ENCODE measurements at regions of chr4 and their contacts with region 1.

Region 1: DNA sequence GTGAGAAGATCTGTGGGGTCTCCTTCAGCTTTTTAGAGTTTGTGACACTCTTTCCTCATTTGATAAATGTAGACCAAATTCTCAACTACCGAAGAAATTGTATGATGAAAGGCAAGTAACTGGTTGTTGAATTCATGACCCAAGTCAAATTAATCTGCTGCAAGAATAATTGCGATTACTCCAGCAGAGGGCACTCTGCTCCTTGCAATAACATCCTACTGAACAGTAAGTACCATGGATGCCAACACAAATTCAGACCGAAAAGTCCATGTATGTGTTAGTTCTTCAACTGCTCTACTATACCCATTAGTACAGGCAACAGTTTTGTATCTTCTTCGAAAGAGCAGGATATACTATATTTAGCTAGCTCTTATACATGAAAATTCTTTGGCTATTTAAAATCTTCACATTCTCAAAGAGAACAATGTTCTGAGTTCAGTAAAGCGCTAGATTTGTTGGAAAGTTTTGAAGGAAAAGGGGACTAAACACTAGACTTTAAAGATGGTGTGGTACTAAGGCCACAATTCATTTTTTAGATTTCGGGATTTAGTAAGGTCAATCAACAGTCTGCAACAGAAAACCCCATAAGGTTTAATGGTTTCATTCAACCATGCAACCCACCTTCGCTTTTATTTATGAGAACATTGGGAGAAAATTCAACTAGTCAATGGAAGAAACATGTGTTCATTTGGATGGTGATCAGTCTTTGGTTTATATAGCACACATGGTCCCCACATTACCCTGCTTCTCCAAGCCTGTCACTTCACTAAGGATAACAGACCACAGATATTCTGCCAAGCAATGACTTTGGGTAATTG is 105.4 kb upstream of the TBC1D9 start:
- DNase-seq: no peak
- H3K4me3 ChIP-seq: no peak overlapping the region
- H3K27ac ChIP-seq: no peak overlapping the region
- H3K4me1 ChIP-seq: peaks cover 0 to 19% (median 11%) of the 10 kb centered on the region in 6 donors
- H3K27me3 ChIP-seq: no peaks in the 10 kb centered on the region
- CTCF ChIP-seq: peak; percentile 45 to 87 (median 72)
- POLR2A ChIP-seq: no peak

Region 2: DNA sequence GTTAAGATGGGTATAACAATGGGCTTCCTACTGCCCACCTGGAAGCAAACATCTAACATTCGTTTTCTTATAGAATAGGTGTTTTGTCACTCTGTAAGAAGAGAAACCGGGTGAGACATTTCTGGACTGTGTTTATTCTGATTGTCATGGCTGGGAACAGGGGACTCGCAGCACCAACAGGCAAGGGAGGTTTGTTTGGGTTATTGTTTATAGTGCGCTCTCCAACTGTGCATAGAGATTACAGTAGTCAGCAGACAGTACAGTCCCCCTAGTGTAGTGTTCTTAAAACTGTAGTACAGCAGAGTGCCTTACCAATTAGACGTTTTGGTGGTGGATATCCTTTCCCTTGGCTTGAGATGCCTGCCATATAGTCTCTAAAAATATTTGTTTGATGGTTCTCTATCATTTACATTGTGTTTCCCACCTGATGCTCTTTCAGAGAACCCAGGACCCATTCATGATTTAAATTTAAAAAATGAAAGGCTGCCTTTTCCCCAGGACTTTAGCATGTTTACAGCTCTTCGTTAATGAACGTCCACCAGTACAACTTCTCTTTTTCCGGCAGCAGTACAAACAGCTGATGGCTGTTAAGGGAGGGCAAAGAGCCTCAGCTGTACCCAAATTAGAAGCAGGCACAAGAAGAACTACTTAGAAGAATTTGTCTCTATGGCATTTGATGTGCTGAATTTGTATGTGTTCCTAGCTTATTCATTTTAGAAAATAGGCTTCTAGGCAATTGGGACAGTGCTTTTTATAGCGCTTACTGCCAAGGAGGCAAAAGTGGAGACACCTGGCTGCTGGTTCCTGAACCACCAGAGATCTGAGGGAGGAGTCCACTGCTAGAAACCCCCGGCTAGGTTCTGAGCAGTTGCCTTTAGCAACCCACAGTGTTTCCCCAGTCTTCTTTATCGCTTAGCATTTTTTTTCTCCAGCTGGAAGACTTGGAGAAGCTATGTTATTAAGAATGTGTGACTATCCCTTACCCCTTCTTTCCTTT is 272.7 kb after region 1 on chr4:
- intact Hi-C with region 1: loop called (anchors 2 kb)
- DNase-seq: no peak
- H3K4me3 ChIP-seq: peak overlapping the region in 3 of 8 donors; percentile 67 to 81 (median 80)
- H3K27ac ChIP-seq: peak overlapping the region in 5 of 8 donors; percentile 7 to 87 (median 80)
- H3K4me1 ChIP-seq: peaks cover 0 to 35% (median 21%) of the 10 kb centered on the region in 6 donors
- H3K27me3 ChIP-seq: peaks cover 0 to 62% (median 33%) of the 10 kb centered on the region in 7 donors
- CTCF ChIP-seq: no peak
- POLR2A ChIP-seq: no peak